Aorta (tissue), 5 donors: ENCODE measurements at regions of chr11 and their contacts with region 1.

Region 1: GRCh38 chr11:75445315-75445953 is 12.4 kb upstream of the KLHL35 start:
- DNase-seq: peak; percentile 75 to 92
- ATAC-seq: peak; percentile 80
- H3K4me3 ChIP-seq: no peak overlapping the region
- H3K27ac ChIP-seq: no peak overlapping the region
- H3K4me1 ChIP-seq: no peaks in the 10 kb centered on the region
- H3K27me3 ChIP-seq: no peaks in the 10 kb centered on the region

Region 2: DNA sequence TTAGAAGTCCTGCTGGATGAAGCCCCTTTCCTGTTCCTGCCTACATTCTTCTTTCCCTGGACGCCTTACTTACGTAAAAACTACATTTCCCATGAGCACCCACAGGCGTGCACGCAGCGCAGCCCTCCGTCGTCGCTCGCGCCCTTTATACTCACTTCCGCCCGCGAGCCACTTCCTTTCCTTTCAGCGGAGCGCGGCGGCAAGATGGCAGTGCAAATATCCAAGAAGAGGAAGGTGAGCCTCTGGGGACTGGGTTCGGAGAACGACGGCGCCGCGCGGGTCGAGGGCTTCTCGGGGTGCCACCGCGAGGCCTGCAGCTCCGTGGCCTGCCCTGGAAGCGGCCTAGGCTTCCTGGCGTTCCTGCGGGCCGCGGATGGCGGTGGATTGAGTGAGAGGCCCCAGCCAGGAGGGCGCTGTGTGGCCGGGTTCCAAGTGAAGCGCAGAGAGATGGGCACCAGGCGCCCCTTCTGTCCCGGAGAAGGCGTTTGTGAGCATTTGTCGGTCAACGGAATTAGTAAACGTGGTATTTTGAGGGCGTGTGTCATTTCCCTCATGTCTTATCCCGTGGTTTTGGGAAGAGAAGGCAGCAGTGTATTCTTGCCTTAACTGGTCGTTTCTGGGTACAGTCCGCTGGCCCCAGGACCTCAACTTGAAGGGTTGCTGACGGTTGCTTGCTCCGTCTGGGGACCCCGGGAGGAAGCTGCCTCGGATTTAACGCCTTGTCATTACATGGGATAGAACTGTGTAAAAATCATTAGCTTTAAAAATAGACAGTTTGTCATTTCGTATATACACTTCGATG is 45.9 kb before region 1 on chr11 and contains the start of gene RPS3:
- intact Hi-C with region 1: loop called in 1 of 2 experiments (anchors 10 kb)
- DNase-seq: peak; percentile 94 to 97
- ATAC-seq: peak; percentile 97
- H3K4me3 ChIP-seq: peak within 1 kb of the TSS; percentile 55 to 73
- H3K27ac ChIP-seq: peak within 1 kb of the TSS in 1 of 2 donors; percentile 93
- H3K4me1 ChIP-seq: no peaks in the 10 kb centered on the region
- H3K27me3 ChIP-seq: no peaks in the 10 kb centered on the region
- total RNA-seq, gene RPS3: 1,466 to 1,593 TPM

Region 3: GRCh38 chr11:75406338-75406777 is 39.1 kb before region 1 on chr11:
- intact Hi-C with region 1: loop called in 1 of 2 experiments (anchors 2 kb)
- DNase-seq: no peak
- ATAC-seq: no peak
- H3K4me3 ChIP-seq: no peak overlapping the region
- H3K27ac ChIP-seq: no peak overlapping the region
- H3K4me1 ChIP-seq: no peaks in the 10 kb centered on the region
- H3K27me3 ChIP-seq: no peaks in the 10 kb centered on the region